B cell (primary cell): ENCODE measurements at regions of chr5 and their contacts with region 1.

Region 1: DNA sequence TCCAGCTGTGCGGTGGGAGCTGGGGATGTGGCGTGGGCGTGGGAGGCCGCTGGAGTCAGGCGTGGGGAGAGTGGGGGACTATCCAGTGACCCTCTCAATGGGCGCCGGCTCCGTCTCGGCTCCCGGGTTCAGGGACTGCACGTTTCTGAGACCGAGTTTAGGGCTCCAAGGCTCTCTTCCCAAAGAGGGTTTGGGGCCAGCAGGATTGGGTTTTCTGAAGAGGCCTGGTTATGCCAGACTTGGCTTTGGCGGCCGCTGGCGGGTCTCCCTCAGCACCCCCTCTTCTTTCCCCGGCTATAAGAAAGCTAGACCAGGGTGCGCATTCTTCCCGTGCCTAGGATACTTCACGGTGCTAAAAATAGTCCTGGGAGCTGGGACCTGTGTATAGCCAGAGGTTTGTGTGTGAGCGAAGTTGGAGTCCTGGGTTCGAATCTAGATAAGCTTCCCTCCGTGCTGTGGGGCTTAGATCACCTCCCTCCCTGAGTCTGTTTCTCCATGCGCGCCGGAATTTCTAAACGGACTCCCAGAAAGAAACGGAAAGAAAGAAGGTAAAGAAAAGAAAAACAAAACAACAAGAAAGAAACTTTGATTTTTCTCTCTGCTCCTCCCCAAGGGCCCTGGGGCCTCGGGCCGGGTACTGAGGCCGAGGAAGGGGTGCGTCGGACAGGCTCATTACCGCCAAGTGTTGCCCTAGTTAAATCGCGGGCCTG is 5.0 kb downstream of the HAND1 start:
- DNase-seq: peak; percentile 40
- ATAC-seq: no peak
- H3K4me3 ChIP-seq: no peak overlapping the region
- H3K4me3 Mint-ChIP-seq: peak overlapping the region; percentile 54
- H3K27ac ChIP-seq: no peak overlapping the region
- H3K27ac Mint-ChIP-seq: no peak overlapping the region
- H3K4me1 ChIP-seq: peaks cover 50 to 62% of the 10 kb centered on the region in 2 donors
- H3K4me1 Mint-ChIP-seq: peaks cover 42% of the 10 kb centered on the region
- H3K27me3 ChIP-seq: peaks cover 0 to 86% (median 78%) of the 10 kb centered on the region in 4 experiments
- H3K27me3 Mint-ChIP-seq: peaks cover 73% of the 10 kb centered on the region
- CTCF ChIP-seq: no peak

Region 2: DNA sequence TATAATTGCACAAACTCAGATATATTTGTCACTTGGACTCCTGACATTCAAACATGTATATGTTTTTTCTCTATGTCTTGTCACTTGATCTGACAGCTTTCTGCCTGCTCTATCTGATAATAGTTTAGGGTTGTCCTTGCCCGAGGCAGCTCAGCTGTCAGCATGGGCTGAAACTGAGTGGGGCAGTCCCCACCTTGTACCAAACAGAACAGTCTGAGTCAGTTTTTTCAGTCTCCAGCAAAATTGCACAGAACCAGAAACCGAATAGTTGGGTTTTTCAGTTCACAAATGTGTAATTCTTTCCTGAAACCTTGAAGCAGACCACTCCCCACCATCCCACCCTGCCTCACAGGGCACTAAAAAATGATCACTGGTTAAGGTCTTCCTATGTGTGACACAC is 14.5 kb after region 1 on chr5:
- CTCF ChIA-PET with region 1: interaction called, 3 read pairs
- POLR2A ChIA-PET with region 1: no interaction called
- intact Hi-C with region 1: loop called (anchors 2 kb)
- DNase-seq: no peak
- ATAC-seq: no peak
- H3K4me3 ChIP-seq: no peak overlapping the region
- H3K4me3 Mint-ChIP-seq: no peak overlapping the region
- H3K27ac ChIP-seq: no peak overlapping the region
- H3K27ac Mint-ChIP-seq: no peak overlapping the region
- H3K4me1 ChIP-seq: peaks cover 10 to 16% of the 10 kb centered on the region in 2 donors
- H3K4me1 Mint-ChIP-seq: peaks cover 13% of the 10 kb centered on the region
- H3K27me3 ChIP-seq: peaks cover 0 to 64% (median 57%) of the 10 kb centered on the region in 4 experiments
- H3K27me3 Mint-ChIP-seq: peaks cover 72% of the 10 kb centered on the region
- CTCF ChIP-seq: no peak